ENCODE measurements at regions of chr18 and their contacts with region 1.

Region 1: GRCh38 chr18:67515945-67516538 is 478 bp downstream of the DSEL start:
- DNase-seq: peak; percentile 92
- H3K4me3 Mint-ChIP-seq: peak overlapping the region; percentile 86
- H3K27ac Mint-ChIP-seq: peak overlapping the region; percentile 68
- H3K4me1 Mint-ChIP-seq: peaks cover 51% of the 10 kb centered on the region
- H3K27me3 Mint-ChIP-seq: no peaks in the 10 kb centered on the region
- CTCF ChIP-seq: peak; percentile 67

Region 2: DNA sequence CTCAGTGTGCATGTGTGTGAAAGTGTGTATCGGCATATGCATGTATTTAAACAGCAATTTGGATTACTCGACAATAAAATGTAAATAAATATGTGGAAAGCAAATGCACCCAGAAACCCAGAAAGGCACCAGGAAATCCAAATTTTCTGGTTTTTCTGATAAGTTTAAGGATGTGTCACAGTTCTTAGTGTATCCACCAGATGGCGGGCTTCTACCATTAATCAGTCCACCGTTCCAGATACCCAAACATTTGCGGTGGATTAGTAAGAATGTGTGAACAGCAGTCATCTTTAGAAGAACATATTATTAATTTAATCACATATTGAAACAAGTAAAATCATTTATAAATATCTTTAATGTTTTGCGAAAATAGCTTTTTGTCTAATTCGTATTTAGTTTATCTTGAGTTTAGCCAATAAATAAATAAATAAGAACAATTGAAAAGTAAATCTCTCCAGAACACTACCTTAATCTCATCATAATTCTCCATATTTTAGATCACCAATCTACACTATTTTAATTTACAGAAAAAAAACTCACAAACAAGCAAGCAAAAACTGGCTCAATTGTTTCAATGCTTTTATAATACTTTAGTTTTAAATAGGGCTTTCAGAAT is 298.4 kb before region 1 on chr18:
- CTCF ChIA-PET with region 1: interaction called, 12 read pairs
- POLR2A ChIA-PET with region 1: interaction called, 8 read pairs
- intact Hi-C with region 1: loop called (anchors 1 kb)
- DNase-seq: peak; percentile 68
- H3K4me3 Mint-ChIP-seq: no peak overlapping the region
- H3K27ac Mint-ChIP-seq: no peak overlapping the region
- H3K4me1 Mint-ChIP-seq: no peaks in the 10 kb centered on the region
- H3K27me3 Mint-ChIP-seq: no peaks in the 10 kb centered on the region
- CTCF ChIP-seq: peak; percentile 72

Region 3: GRCh38 chr18:67504739-67505138 is 11.3 kb before region 1 on chr18:
- CTCF ChIA-PET with region 1: no interaction called
- POLR2A ChIA-PET with region 1: no interaction called
- intact Hi-C with region 1: no loop called
- DNase-seq: no peak
- H3K4me3 Mint-ChIP-seq: no peak overlapping the region
- H3K27ac Mint-ChIP-seq: no peak overlapping the region
- H3K4me1 Mint-ChIP-seq: peaks cover 13% of the 10 kb centered on the region
- H3K27me3 Mint-ChIP-seq: no peaks in the 10 kb centered on the region
- CTCF ChIP-seq: no peak

Region 4: GRCh38 chr18:67600181-67601172 is 84.4 kb after region 1 on chr18:
- CTCF ChIA-PET with region 1: interaction called, 5 read pairs
- POLR2A ChIA-PET with region 1: interaction called, 64 read pairs
- intact Hi-C with region 1: no loop called
- DNase-seq: no peak
- H3K4me3 Mint-ChIP-seq: no peak overlapping the region
- H3K27ac Mint-ChIP-seq: peak overlapping the region; percentile 12
- H3K4me1 Mint-ChIP-seq: peaks cover 28% of the 10 kb centered on the region
- H3K27me3 Mint-ChIP-seq: no peaks in the 10 kb centered on the region
- CTCF ChIP-seq: no peak

Region 5: GRCh38 chr18:67845035-67845434 is 329.0 kb after region 1 on chr18:
- CTCF ChIA-PET with region 1: interaction called, 49 read pairs
- POLR2A ChIA-PET with region 1: interaction called, 20 read pairs
- intact Hi-C with region 1: loop called (anchors 1 kb)
- DNase-seq: peak; percentile 20
- H3K4me3 Mint-ChIP-seq: no peak overlapping the region
- H3K27ac Mint-ChIP-seq: no peak overlapping the region
- H3K4me1 Mint-ChIP-seq: no peaks in the 10 kb centered on the region
- H3K27me3 Mint-ChIP-seq: no peaks in the 10 kb centered on the region
- CTCF ChIP-seq: peak; percentile 18

Region 6: GRCh38 chr18:68262690-68263294 is 746.8 kb after region 1 on chr18:
- CTCF ChIA-PET with region 1: no interaction called
- POLR2A ChIA-PET with region 1: interaction called, 4 read pairs
- intact Hi-C with region 1: loop called (anchors 5 kb)
- DNase-seq: peak; percentile 65
- H3K4me3 Mint-ChIP-seq: peak overlapping the region; percentile 43
- H3K27ac Mint-ChIP-seq: peak overlapping the region; percentile 87
- H3K4me1 Mint-ChIP-seq: peaks cover 17% of the 10 kb centered on the region
- H3K27me3 Mint-ChIP-seq: no peaks in the 10 kb centered on the region
- CTCF ChIP-seq: no peak

Region 7: DNA sequence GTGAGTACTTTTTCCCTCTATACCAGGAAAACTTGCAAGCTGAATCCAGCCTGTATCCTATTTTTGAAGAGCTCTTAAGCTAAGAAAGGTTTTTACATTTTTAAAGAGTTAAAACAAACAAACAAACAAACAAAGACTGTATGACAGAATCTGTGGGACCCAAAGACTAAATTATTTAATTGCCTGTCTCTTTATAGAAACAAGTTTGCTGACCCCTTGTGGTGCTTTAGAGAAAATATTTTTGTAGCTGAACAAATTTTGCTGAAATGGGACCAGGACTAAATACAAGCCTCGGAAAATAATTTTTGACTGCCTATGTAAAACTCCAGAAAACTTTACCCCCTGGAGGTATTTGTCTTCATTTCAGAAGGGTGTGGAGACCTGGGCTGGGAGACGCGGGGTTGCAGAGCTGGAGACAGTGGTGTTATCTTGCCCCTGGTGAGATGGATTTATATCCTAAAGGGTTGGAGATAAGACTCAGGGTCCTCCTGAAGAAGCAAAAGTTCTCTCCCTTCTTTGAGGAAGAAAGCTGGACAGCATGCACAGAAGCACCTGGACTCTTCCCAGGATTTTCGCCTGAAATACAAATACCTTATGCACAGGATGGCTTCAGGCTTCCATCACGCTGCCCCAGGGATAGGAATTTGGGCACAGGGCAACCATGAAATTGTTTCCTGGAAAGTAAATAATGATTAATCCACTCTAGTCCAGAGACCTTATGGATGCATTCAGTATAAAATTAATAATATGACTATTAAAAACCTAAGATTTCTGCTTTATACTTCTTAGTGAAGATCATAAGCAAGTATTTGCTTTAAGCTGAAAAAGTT is 1144.5 kb after region 1 on chr18:
- CTCF ChIA-PET with region 1: interaction called, 18 read pairs
- POLR2A ChIA-PET with region 1: no interaction called
- intact Hi-C with region 1: loop called (anchors 1 kb)
- DNase-seq: peak; percentile 61
- H3K4me3 Mint-ChIP-seq: no peak overlapping the region
- H3K27ac Mint-ChIP-seq: no peak overlapping the region
- H3K4me1 Mint-ChIP-seq: no peaks in the 10 kb centered on the region
- H3K27me3 Mint-ChIP-seq: no peaks in the 10 kb centered on the region
- CTCF ChIP-seq: peak; percentile 48